Naive thymus-derived CD4-positive, alpha-beta T cell (primary cell): ENCODE measurements at regions of chr5 and their contacts with region 1.

Region 1: GRCh38 chr5:78405829-78406750 is 45.7 kb downstream of the SCAMP1 start:
- DNase-seq: no peak
- ATAC-seq: no peak
- H3K4me3 ChIP-seq: no peak overlapping the region
- H3K4me3 Mint-ChIP-seq: no peak overlapping the region
- H3K27ac ChIP-seq: no peak overlapping the region
- H3K27ac Mint-ChIP-seq: peak overlapping the region in 2 of 9 donors; percentile 1 to 32
- H3K4me1 ChIP-seq: no peaks in the 10 kb centered on the region
- H3K4me1 Mint-ChIP-seq: peaks cover 24 to 67% (median 55%) of the 10 kb centered on the region in 7 donors
- H3K27me3 ChIP-seq: no peaks in the 10 kb centered on the region
- H3K27me3 Mint-ChIP-seq: no peaks in the 10 kb centered on the region

Region 2: DNA sequence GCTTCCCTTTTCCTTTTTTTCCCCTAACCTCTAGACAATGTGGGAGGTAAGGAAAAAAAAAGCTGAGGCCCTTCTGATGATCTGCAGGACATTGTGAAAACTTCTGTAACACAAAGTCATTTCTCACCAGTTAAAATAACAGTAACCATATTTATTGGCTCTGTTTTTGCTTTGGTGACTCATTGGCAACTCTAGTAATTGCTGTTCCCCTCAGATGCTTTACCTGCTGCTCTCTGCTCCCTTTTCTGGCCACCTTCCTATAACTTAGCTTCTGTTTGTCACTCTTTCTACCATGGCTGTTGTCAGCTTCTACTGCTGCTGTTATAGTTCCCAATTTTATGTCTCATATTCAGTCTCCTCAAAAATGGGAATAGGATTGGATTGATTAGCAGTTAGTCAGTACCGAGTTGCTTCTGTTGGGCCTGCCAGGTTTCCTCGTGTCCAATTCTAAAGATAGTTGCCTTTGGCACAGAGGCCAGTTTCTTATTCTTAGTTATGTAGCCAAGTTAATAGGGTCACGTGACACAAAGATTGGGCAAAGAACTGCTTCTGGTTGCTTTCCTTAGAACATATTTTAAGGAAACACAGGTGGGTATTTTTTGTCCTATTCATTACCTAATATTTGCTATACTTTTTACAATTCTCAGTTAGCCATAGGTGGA is 28.9 kb before region 1 on chr5:
- CTCF ChIA-PET with region 1: no interaction called
- POLR2A ChIA-PET with region 1: no interaction called
- intact Hi-C with region 1: loop called in 1 of 2 experiments (anchors 1 kb)
- DNase-seq: no peak
- ATAC-seq: no peak
- H3K4me3 ChIP-seq: no peak overlapping the region
- H3K4me3 Mint-ChIP-seq: no peak overlapping the region
- H3K27ac ChIP-seq: no peak overlapping the region
- H3K27ac Mint-ChIP-seq: no peak overlapping the region
- H3K4me1 ChIP-seq: no peaks in the 10 kb centered on the region
- H3K4me1 Mint-ChIP-seq: peaks cover 10 to 78% (median 41%) of the 10 kb centered on the region in 7 donors
- H3K27me3 ChIP-seq: no peaks in the 10 kb centered on the region
- H3K27me3 Mint-ChIP-seq: no peaks in the 10 kb centered on the region